ENCODE measurements at regions of chr3 and their contacts with region 1.

Region 1: GRCh38 chr3:185677146-185677829 is 91.2 kb downstream of the SENP2 start:
- DNase-seq: peak; percentile 83
- H3K4me3 Mint-ChIP-seq: no peak overlapping the region
- H3K27ac Mint-ChIP-seq: peak overlapping the region; percentile 47
- H3K4me1 Mint-ChIP-seq: peaks cover 21% of the 10 kb centered on the region
- H3K27me3 Mint-ChIP-seq: no peaks in the 10 kb centered on the region
- CTCF ChIP-seq: peak; percentile 94

Region 2: GRCh38 chr3:185595526-185595925 is 81.8 kb before region 1 on chr3:
- CTCF ChIA-PET with region 1: no interaction called
- intact Hi-C with region 1: no loop called
- DNase-seq: no peak
- H3K4me3 Mint-ChIP-seq: no peak overlapping the region
- H3K27ac Mint-ChIP-seq: no peak overlapping the region
- H3K4me1 Mint-ChIP-seq: no peaks in the 10 kb centered on the region
- H3K27me3 Mint-ChIP-seq: no peaks in the 10 kb centered on the region
- CTCF ChIP-seq: no peak

Region 3: GRCh38 chr3:185687271-185687878 is 10.1 kb after region 1 on chr3:
- CTCF ChIA-PET with region 1: interaction called, 15 read pairs
- intact Hi-C with region 1: no loop called
- DNase-seq: peak; percentile 25
- H3K4me3 Mint-ChIP-seq: no peak overlapping the region
- H3K27ac Mint-ChIP-seq: peak overlapping the region; percentile 98
- H3K4me1 Mint-ChIP-seq: peaks cover 36% of the 10 kb centered on the region
- H3K27me3 Mint-ChIP-seq: no peaks in the 10 kb centered on the region
- CTCF ChIP-seq: no peak

Region 4: DNA sequence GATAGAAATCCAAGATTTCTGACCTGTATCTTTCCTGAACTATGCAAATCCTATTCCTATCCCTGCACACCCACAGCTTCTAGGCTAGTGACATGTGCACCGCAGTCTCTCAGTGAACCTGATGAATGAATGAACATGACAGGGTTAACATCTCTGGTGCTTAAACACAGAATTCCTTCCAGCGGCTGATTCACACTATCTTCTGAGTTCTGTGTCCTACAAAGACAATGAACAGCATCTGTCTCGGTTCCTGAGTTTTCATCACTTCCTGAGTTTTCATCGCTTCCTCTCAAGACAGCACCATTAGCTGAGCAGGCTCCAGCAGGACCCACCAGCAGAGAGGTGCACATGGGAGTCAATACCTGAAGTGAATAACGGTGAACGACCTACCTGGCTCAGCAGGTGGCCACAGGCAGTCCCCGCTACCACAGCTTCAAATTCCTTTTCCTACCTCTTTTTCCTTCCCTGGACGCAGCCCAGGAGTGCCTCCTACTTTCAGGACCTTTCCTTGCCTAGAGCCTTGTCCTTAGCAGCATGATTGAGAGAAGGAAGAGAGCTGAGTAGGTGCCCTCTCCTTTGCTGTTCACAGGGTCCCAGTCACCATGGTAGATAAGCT is 34.1 kb after region 1 on chr3:
- CTCF ChIA-PET with region 1: interaction called, 3 read pairs
- intact Hi-C with region 1: loop called (anchors 5 kb)
- DNase-seq: no peak
- H3K4me3 Mint-ChIP-seq: no peak overlapping the region
- H3K27ac Mint-ChIP-seq: no peak overlapping the region
- H3K4me1 Mint-ChIP-seq: peaks cover 66% of the 10 kb centered on the region
- H3K27me3 Mint-ChIP-seq: no peaks in the 10 kb centered on the region
- CTCF ChIP-seq: no peak

Region 5: DNA sequence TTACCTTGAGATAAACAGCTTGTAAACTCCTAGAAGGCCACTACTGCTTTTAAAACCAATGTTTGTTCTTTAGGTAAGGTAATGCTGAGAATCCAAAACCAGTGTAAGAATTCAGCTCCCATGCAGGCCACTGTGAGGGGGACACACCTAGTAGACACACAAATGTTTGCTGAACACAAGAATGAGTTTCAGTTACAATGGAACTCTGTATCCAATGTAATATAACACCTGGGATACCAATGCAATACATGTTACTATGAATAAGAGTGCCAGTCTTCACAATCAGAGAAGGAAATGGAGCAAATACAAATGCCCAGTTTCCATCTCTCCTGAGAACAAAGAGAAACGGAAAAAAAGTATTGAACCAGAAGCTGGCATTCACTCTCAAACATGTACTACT is 81.6 kb after region 1 on chr3:
- CTCF ChIA-PET with region 1: no interaction called
- intact Hi-C with region 1: loop called (anchors 2 kb)
- DNase-seq: peak; percentile 52
- H3K4me3 Mint-ChIP-seq: peak overlapping the region; percentile 37
- H3K27ac Mint-ChIP-seq: peak overlapping the region; percentile 90
- H3K4me1 Mint-ChIP-seq: peaks cover 87% of the 10 kb centered on the region
- H3K27me3 Mint-ChIP-seq: no peaks in the 10 kb centered on the region
- CTCF ChIP-seq: no peak

Region 6: GRCh38 chr3:185912929-185913901 is 235.9 kb after region 1 on chr3:
- CTCF ChIA-PET with region 1: no interaction called
- intact Hi-C with region 1: loop called (anchors 5 kb)
- DNase-seq: no peak
- H3K4me3 Mint-ChIP-seq: no peak overlapping the region
- H3K27ac Mint-ChIP-seq: peak overlapping the region; percentile 7
- H3K4me1 Mint-ChIP-seq: peaks cover 10% of the 10 kb centered on the region
- H3K27me3 Mint-ChIP-seq: no peaks in the 10 kb centered on the region
- CTCF ChIP-seq: no peak

Region 7: DNA sequence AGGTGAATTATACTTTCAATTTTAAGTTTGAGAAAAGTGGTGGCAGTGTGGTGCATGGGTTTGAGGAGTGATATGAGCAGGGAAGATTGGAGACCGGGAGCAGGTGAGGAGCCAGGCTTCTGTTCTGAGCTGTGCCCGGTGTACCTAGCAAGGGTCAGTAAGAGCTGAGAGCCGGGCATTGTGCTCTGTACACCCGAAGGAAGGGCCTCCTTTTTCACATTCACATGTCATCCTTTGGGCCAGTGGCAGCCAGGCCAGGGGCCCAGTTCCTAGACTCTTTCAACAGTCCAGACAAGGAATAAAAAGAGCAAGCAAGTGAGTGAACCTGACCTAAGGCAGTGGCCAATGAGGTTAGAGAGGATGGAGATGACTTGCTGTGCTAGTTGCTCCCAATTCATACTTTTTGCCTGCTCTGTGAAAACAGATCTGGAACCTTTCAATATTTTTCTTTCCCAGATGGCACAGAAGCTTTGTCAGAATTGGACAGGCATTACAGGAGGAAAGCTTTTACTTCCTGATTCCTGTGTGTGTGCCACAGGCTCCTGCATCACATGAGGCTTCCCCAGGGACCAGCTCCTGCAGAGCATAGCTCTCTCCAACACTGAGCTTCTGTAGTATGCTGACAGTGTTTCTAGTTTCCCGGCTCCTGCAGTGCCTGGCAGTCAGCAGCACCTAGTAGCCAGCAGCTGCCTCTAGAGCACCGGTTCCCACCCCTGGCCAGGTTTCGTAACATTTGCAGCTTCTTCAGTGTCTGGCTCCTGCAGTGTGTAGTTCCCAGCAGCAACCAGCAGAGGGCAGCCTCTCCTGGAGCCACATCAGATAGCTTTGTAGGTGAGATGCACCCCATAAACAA is 265.8 kb after region 1 on chr3:
- CTCF ChIA-PET with region 1: interaction called, 12 read pairs
- intact Hi-C with region 1: no loop called
- DNase-seq: peak; percentile 90
- H3K4me3 Mint-ChIP-seq: no peak overlapping the region
- H3K27ac Mint-ChIP-seq: no peak overlapping the region
- H3K4me1 Mint-ChIP-seq: peaks cover 23% of the 10 kb centered on the region
- H3K27me3 Mint-ChIP-seq: no peaks in the 10 kb centered on the region
- CTCF ChIP-seq: peak; percentile 99

Region 8: DNA sequence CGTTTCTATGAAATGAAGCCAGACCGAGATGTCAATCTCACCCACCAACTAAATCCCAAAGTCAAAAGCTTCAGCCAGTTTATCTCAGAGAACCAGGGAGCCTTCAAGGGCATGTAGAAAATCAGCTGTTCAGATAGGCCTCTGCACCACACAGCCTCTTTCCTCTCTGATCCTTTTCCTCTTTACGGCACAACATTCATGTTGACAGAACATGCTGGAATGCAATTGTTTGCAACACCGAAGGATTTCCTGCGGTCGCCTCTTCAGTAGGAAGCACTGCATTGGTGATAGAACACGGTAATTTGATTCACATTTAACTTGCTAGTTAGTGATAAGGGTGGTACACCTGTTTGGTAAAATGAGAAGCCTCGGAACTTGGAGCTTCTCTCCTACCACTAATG is 302.4 kb after region 1 on chr3:
- CTCF ChIA-PET with region 1: no interaction called
- intact Hi-C with region 1: no loop called
- DNase-seq: no peak
- H3K4me3 Mint-ChIP-seq: no peak overlapping the region
- H3K27ac Mint-ChIP-seq: no peak overlapping the region
- H3K4me1 Mint-ChIP-seq: peaks cover 17% of the 10 kb centered on the region
- H3K27me3 Mint-ChIP-seq: peaks cover 16% of the 10 kb centered on the region
- CTCF ChIP-seq: no peak

Region 9: GRCh38 chr3:186044973-186045372 is 367.7 kb after region 1 on chr3:
- CTCF ChIA-PET with region 1: no interaction called
- intact Hi-C with region 1: no loop called
- DNase-seq: no peak
- H3K4me3 Mint-ChIP-seq: no peak overlapping the region
- H3K27ac Mint-ChIP-seq: no peak overlapping the region
- H3K4me1 Mint-ChIP-seq: no peaks in the 10 kb centered on the region
- H3K27me3 Mint-ChIP-seq: no peaks in the 10 kb centered on the region
- CTCF ChIP-seq: no peak

Region 10: DNA sequence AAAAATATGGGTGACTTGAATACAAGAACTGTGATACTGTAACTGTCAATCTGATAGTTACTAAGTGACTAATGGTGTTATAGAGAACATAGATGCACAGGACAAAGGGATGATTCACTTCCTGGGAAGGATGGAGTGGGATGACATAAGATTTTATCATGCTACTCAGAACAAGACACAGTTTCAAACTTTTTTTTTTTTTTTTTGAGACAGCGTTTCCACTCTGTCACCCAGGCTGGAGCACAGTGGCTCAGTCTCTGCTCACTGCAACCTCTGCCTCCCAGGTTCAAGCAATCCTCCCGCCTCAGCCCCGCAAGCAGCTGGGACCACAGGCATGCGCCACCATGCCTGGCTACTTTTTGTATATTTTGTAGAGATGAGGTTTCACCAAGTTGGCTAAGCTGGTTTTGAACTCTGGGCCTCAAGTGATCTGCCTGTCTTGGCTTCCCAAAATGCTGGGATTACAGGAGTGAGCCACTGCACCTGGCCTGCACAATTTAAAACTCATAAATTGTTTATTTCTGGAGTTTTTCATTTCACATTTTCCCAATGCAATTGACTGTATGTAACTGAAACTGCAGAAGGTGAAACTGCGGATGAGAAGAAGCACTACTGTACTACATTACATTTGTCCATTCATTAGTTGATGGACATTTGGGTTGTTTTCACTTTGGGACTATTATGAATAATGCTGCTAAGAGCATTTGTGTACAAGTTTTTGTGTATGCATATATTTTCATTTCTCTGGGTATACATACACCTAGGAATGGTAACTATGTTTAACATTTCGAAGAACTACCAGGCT is 1205.8 kb after region 1 on chr3:
- CTCF ChIA-PET with region 1: no interaction called
- intact Hi-C with region 1: no loop called
- DNase-seq: no peak
- H3K4me3 Mint-ChIP-seq: no peak overlapping the region
- H3K27ac Mint-ChIP-seq: no peak overlapping the region
- H3K4me1 Mint-ChIP-seq: no peaks in the 10 kb centered on the region
- H3K27me3 Mint-ChIP-seq: peaks cover 29% of the 10 kb centered on the region
- CTCF ChIP-seq: no peak